PC-3 (cell line): ENCODE measurements at regions of chr1 and their contacts with region 1.

Region 1: GRCh38 chr1:44907893-44908292 is 64.8 kb upstream of the PTCH2 start:
- DNase-seq: no peak
- ATAC-seq: peak; percentile 22; the same call in 1 of the 2 replicates
- H3K4me3 ChIP-seq: no peak overlapping the region
- H3K27ac ChIP-seq: no peak overlapping the region
- H3K4me1 ChIP-seq: no peaks in the 10 kb centered on the region
- H3K27me3 ChIP-seq: no peaks in the 10 kb centered on the region
- CTCF ChIP-seq: no peak

Region 2: DNA sequence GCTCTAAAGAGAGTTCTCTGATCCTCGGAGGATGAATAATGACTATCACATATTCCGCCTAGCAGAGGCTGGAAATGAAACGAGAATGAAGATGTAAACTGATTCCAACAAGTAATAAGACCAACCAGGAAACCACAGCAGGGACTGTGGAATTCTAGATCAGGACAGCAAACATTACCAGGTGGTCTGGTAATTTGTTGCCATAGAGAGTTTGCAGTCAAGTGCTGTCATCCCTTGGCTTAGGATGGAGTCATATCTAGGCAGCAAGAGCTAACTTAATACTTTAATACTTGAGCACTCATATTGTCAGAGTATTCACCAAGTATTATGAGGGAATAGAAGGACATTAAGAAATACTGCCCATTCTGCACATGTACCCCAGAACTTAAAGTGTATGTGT is 477.4 kb after region 1 on chr1:
- CTCF ChIA-PET with region 1: interaction called, 10 read pairs
- POLR2A ChIA-PET with region 1: no interaction called
- intact Hi-C with region 1: no loop called
- DNase-seq: no peak
- ATAC-seq: no peak
- H3K4me3 ChIP-seq: no peak overlapping the region
- H3K27ac ChIP-seq: no peak overlapping the region
- H3K4me1 ChIP-seq: no peaks in the 10 kb centered on the region
- H3K27me3 ChIP-seq: no peaks in the 10 kb centered on the region
- CTCF ChIP-seq: no peak